BJ (cell line): ENCODE measurements at regions of chr3 and their contacts with region 1.

Region 1: GRCh38 chr3:132543036-132543739 is 53.9 kb upstream of the ACKR4 start:
- DNase-seq: peak; percentile 91
- H3K4me3 ChIP-seq: no peak overlapping the region
- H3K27me3 ChIP-seq: no peaks in the 10 kb centered on the region
- CTCF ChIP-seq: no peak

Region 2: DNA sequence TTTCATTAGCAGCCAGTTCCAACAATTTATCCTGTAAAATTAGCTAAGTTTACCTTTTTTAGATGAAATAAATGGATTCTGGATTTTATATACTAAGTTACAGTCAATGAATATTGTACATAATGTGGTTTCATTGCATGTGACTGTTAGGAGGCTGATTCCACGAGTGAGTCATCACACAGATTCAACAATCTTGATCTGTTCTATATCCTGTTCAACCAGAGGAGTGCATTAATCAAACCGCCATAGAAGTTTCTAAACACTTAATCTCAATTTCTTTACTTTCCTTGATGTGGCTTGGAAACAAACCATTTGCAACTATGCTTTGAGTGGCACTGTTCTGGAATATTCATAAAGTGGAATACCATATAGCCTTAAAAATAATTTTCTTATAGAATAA is 110.5 kb before region 1 on chr3:
- CTCF ChIA-PET with region 1: no interaction called
- POLR2A ChIA-PET with region 1: no interaction called
- DNase-seq: peak; percentile 14
- H3K4me3 ChIP-seq: no peak overlapping the region
- H3K27me3 ChIP-seq: no peaks in the 10 kb centered on the region
- CTCF ChIP-seq: no peak

Region 3: DNA sequence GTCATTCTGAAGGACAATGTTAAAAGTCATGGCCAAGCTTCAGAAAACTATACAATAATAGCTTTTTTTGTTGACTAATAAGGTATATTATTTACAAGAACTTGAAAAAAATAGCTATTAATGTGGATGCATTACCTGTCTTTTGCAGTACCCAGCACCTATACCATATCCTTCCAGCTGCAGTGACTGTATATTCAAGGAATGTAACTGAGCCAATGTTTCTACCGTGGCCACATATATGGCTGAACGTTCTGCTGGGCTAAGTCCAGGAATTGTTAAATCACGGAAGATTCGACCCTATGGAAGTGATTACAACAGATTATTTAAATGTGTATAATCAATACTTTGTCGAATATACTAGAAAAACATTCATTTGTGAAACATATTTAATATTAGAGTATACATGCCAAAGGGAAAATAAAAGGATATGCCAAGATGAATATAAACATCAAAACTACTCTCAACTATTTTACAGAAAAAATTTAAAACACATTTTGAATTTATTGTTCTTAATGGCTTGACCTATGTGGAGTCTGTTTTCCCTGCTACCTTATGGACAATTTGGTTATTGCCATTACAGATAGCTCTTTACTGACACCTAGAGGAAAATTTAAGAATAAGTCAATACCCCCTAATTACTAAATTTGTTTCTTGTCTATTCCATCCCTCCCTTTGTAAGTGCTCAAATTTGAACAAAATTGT is 98.8 kb after region 1 on chr3:
- CTCF ChIA-PET with region 1: interaction called, 137 read pairs
- POLR2A ChIA-PET with region 1: no interaction called
- DNase-seq: no peak
- H3K4me3 ChIP-seq: no peak overlapping the region
- H3K27me3 ChIP-seq: no peaks in the 10 kb centered on the region
- CTCF ChIP-seq: peak; percentile 59